GM10248 (cell line): ENCODE measurements at regions of chr3 and their contacts with region 1.

Region 1: DNA sequence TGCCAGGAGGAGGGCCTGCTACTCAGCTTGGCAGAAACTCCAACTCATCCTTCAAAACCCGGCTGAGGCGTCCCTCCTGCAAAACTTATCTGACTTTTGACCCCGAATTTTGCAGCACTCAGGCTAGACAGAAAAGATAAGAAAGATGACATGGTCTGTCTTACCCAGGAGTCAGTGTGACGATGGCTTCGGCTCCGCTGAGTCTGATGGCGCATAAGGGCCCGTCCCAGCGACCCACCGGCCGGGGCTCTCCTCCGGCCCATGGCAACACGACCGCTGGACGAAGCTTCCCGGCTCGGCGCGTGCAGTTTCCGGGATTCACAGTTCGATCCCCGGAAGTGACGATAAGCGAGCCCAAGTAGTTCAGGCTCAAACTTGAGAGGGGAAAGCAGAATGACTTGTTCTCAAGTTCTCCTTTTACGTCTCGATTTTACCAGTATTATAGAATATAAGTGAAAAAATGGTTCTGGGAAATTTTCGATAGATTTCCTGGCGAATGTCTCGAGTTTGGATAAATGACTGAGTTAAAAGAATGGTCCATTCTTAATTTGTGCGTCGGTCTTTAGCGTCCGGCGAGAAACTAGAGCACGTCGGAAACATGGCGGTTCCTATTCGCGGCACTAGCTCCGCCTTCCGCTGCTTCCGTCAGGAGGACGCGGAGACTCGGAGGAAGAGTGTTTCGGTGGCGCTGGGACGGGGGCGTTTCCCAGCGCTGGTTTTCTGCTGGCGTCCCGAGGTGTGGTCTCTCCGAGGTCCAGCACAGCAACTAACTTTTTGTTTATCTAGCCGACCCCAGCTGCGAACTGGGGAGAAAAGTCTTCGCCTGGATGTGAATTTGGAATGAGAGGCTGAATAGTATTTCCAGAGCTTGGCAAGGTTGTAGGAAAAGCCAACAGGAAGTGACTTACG is at the start of gene LSG1:
- DNase-seq: peak; percentile 88
- CTCF ChIP-seq: no peak

Region 2: GRCh38 chr3:194647747-194648146 is 24.4 kb before region 1 on chr3:
- CTCF ChIA-PET with region 1: interaction called, 13 read pairs
- POLR2A ChIA-PET with region 1: no interaction called
- DNase-seq: no peak
- CTCF ChIP-seq: no peak

Region 3: DNA sequence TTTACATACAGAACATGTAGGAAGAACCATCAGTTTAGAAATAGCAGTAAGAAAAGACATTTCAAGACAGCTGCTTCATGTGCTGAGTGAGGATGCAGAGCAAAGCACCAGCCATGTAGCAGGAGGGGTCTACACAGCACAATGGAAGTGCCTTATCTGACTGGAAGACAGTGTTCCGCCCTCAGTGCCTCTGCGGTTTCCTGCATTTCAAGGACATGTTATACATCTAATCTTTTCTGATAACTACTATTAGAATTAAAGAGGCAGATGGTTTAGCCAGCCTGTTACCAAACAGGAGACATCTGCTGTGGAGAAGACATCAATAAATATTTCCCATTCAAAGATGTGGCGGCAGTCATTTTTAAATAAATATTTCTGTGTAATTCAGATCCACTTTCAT is 10.8 kb before region 1 on chr3:
- CTCF ChIA-PET with region 1: interaction called, 59 read pairs
- POLR2A ChIA-PET with region 1: no interaction called
- DNase-seq: no peak
- CTCF ChIP-seq: no peak

Region 4: DNA sequence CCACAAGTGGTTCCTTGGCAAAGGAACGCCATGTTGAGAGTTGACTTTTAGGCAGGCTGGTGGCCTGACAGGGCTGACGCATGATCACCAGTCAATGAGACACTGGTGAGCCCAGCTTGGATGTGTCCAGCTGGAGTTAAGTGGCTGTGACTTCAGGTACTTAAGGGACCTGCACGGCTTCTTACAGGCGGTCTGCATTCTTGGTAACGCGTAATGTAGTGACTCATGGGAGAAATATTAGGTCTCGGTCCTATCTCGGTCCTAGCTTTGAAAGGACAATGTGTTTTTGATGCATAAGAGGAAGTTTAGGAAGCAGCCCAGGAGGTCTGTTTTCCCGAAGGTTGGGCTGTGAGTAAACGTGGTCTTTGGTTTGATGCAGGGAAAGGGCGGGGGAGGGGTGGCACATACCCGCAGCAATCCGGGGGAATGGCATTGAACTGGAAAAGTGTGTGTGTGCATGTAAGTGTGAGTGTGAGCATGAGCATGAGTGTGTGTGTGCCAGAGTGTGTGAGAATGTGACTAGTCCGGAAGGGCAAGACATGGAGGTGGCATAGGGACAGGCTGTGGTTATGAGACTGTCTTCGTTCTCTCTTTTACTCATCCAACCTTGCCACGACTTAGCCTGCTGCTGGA is 68.8 kb after region 1 on chr3:
- CTCF ChIA-PET with region 1: no interaction called
- POLR2A ChIA-PET with region 1: no interaction called
- DNase-seq: no peak
- CTCF ChIP-seq: no peak

Region 5: DNA sequence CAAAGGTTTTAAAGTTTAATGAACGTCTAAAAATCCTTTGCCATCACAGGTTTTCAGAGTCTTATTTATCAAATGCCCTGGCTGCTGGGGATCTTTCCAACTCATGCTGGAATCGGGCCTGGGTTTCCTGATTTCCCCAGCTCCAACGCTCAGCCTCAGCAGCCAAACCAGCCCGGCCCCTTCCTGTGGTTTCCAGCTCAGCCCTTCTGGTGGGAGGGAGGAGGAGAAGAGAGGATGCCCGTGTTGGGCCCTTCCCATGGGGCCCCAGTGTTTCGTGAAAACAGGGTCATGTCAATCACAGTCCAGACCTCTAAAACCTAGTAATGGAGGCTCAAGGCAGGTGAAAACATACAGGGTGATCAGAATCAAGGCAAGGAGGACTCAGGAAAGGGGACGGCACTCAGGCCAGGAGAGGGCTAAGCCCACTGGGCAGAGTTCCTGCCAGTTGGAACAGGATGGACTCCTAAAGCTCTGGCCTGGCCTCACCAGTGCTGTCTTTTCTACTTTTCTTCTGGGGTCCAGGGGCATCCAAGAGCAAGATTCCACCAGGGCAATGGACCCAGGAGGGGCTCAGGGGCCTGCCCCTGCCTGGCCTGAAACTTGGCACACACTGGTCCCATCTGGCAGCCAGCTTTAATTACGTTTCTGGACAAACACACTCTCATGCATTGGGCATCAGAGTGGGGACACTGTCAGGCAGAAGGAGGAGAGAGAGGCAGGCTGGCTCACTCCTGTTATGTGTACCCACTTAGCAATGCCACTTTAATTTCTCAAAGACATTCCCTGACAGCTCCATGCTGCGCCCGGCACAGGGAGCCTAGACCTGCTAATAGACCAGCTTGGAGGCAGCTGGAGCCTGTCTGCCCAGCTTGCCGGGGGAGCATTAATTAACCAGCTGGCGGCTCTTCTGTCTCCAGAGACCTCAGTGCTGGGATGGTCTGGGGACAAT is 208.1 kb after region 1 on chr3:
- CTCF ChIA-PET with region 1: no interaction called
- POLR2A ChIA-PET with region 1: no interaction called
- DNase-seq: no peak
- CTCF ChIP-seq: no peak

Region 6: GRCh38 chr3:195106418-195106906 is 434.3 kb after region 1 on chr3:
- CTCF ChIA-PET with region 1: interaction called, 23 read pairs
- POLR2A ChIA-PET with region 1: no interaction called
- DNase-seq: peak; percentile 86
- CTCF ChIP-seq: peak; percentile 99